ENCODE measurements at regions of chr6 and their contacts with region 1.

Region 1: GRCh38 chr6:29649701-29650673 is 6.9 kb upstream of the MOG start:
- DNase-seq: peak; percentile 96 to 98
- ATAC-seq: peak; percentile 96 to 99 (median 98)
- H3K4me3 ChIP-seq: peak overlapping the region; percentile 24 to 72 (median 57)
- H3K27ac ChIP-seq: peak overlapping the region; percentile 78 to 98 (median 95)
- H3K4me1 ChIP-seq: peaks cover 2 to 22% (median 10%) of the 10 kb centered on the region in 9 donors
- H3K27me3 ChIP-seq: peaks cover 0 to 3% (median 0%) of the 10 kb centered on the region in 7 donors
- CTCF ChIP-seq: peak; percentile 86 to 97 (median 94)

Region 2: DNA sequence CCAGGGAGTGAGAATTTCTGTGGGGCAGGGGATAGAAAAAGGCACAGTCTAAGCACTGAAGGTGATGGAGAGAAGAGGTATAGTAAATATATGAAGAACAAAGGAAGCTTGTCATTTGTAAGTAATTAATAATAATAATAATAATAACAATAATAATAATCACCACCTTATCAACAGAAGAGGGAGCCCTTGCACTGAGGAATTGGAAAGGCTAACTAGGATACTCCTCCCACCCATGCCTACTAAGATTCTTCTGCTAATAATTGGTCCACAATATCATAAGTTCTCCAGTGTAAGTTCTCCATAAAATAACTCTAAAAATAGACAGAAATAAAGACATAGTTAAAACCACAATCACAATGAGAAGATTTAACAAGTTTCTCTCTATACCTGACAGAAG is 274.0 kb before region 1 on chr6:
- intact Hi-C with region 1: no loop called
- DNase-seq: no peak
- ATAC-seq: no peak
- H3K4me3 ChIP-seq: no peak overlapping the region
- H3K27ac ChIP-seq: no peak overlapping the region
- H3K4me1 ChIP-seq: no peaks in the 10 kb centered on the region
- H3K27me3 ChIP-seq: peaks cover 0 to 5% (median 0%) of the 10 kb centered on the region in 7 donors
- CTCF ChIP-seq: no peak

Region 3: DNA sequence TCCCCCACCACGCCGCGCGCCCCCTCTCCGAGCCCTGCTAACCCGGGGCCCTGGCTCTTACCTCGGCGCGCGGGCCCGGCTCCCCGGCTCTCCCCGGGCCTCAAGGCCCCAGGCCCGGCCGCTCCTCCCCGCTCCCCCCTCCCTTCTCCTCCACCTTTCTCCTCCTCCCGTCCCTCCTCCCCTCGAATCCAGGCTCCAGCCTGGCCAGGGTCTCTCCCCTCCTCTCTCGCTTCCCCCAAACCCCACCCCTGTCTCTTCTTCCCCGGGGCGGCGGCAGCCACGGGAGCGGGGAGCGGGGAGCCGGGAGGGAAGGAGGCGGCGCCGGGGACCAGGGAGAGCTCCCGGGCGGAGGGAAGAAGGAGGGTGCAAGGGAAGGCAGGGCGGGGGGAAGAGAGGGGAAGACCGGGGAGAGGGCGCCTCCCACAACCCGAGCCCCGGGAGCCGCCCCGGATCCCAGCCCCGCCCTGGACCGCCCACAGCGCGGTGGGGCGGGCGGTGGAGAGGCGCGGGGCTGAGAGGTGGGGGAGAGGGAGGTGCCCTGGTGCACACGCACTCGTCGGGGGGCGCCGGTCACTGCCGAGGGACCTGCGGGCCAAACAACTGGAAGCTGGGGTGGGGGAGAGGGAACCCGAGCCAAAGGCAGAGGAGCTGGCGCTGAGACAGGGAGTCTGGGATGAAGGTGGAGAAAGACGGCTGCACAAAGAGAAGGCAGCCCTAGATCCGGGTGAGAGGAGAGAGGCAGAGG is 17.0 kb before region 1 on chr6 and contains the start of gene GABBR1:
- intact Hi-C with region 1: loop called in 1 of 10 experiments (anchors 1 kb)
- DNase-seq: peak; percentile 88 to 89
- ATAC-seq: peak; percentile 92 to 97 (median 94)
- H3K4me3 ChIP-seq: peak within 1 kb of the TSS; percentile 62 to 87 (median 78)
- H3K27ac ChIP-seq: peak within 1 kb of the TSS in 9 of 10 donors; percentile 59 to 83 (median 78)
- H3K4me1 ChIP-seq: peaks cover 4 to 48% (median 32%) of the 10 kb centered on the region in 9 donors
- H3K27me3 ChIP-seq: peaks cover 0 to 20% (median 0%) of the 10 kb centered on the region in 7 donors
- CTCF ChIP-seq: no peak
- total RNA-seq, gene GABBR1: 10.2 to 31.0 (median 18.2) TPM

Region 4: GRCh38 chr6:29685718-29686326 is 35.8 kb after region 1 on chr6:
- intact Hi-C with region 1: loop called in 3 of 10 experiments (anchors 2 to 5 kb)
- DNase-seq: peak; percentile 16 to 54
- ATAC-seq: peak in 6 of 8 donors; percentile 58 to 81 (median 74)
- H3K4me3 ChIP-seq: no peak overlapping the region
- H3K27ac ChIP-seq: no peak overlapping the region
- H3K4me1 ChIP-seq: no peaks in the 10 kb centered on the region
- H3K27me3 ChIP-seq: peaks cover 0 to 12% (median 0%) of the 10 kb centered on the region in 7 donors
- CTCF ChIP-seq: peak in 7 of 9 donors; percentile 20 to 51 (median 41)

Region 5: GRCh38 chr6:29696155-29697125 is 46.5 kb after region 1 on chr6:
- intact Hi-C with region 1: loop called in 3 of 10 experiments (anchors 2 to 5 kb)
- DNase-seq: no peak
- ATAC-seq: peak in 5 of 8 donors; percentile 47 to 70 (median 58)
- H3K4me3 ChIP-seq: no peak overlapping the region
- H3K27ac ChIP-seq: no peak overlapping the region
- H3K4me1 ChIP-seq: peaks cover 0 to 3% (median 0%) of the 10 kb centered on the region in 9 donors
- H3K27me3 ChIP-seq: peaks cover 0 to 6% (median 0%) of the 10 kb centered on the region in 7 donors
- CTCF ChIP-seq: peak; percentile 15 to 62 (median 47)

Region 6: DNA sequence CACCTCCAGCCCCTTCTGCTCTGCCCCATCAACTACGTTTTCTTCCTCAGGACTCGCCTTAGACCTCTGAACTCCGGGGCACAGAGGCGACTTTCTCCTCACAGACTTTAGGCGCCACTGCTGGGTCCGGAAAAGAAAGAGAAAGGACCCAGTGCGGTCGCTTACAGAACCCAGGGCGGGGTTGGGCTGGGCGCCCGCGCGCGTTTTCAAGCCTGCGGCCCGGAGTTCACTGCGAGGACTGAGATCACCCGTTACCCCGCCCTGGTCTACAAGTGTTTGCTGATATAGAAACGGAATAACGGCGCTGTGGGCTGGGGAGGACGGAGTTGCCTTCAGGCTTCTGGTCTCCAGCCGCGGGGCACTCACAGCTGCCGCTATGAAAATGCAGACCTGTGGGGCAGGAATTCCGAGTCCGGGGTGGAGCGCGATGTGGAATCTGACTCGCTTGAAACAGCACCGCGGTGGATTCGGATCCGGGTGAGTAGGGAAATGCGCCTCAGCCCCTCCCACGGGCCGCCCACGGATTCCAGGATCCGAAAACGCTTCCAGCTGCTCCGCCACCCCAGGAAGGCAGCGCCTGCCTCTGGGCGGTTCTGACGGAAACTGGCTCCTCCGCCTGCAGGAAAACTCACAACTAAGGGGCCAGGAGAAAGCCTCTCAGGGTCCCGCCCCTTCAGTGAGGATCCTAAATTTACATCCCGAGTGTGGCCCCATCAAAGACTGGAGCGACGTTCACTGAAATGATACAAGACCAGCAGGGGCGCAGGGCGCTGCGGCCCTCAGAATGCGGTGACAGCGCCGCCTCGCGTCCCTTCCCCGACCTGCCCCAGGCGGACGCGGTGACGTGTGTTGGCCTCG is 102.7 kb after region 1 on chr6:
- intact Hi-C with region 1: loop called in 2 of 10 experiments (anchors 10 kb)
- DNase-seq: peak; percentile 89 to 90
- ATAC-seq: peak; percentile 84 to 91 (median 86)
- H3K4me3 ChIP-seq: peak overlapping the region; percentile 37 to 82 (median 73)
- H3K27ac ChIP-seq: peak overlapping the region; percentile 75 to 98 (median 96)
- H3K4me1 ChIP-seq: peaks cover 9 to 36% (median 32%) of the 10 kb centered on the region in 9 donors
- H3K27me3 ChIP-seq: no peaks in the 10 kb centered on the region
- CTCF ChIP-seq: peak; percentile 87 to 99 (median 93)